Breast epithelium (tissue), 4 donors: ENCODE measurements at regions of chr16 and their contacts with region 1.

Region 1: GRCh38 chr16:88917146-88917914 is 50.9 kb upstream of the PABPN1L start:
- DNase-seq: no peak
- H3K4me3 ChIP-seq: no peak overlapping the region
- H3K27ac ChIP-seq: no peak overlapping the region
- H3K4me1 ChIP-seq: peaks cover 8 to 10% of the 10 kb centered on the region in 2 donors
- H3K27me3 ChIP-seq: no peaks in the 10 kb centered on the region
- CTCF ChIP-seq: no peak
- POLR2A ChIP-seq: no peak

Region 2: GRCh38 chr16:88957887-88958577 is 40.7 kb after region 1 on chr16:
- intact Hi-C with region 1: loop called (anchors 2 kb)
- DNase-seq: no peak
- H3K4me3 ChIP-seq: no peak overlapping the region
- H3K27ac ChIP-seq: no peak overlapping the region
- H3K4me1 ChIP-seq: no peaks in the 10 kb centered on the region
- H3K27me3 ChIP-seq: peaks cover 0 to 48% of the 10 kb centered on the region in 2 donors
- CTCF ChIP-seq: no peak
- POLR2A ChIP-seq: no peak

Region 3: GRCh38 chr16:88977018-88977811 is 59.9 kb after region 1 on chr16 and contains the start of gene CBFA2T3:
- intact Hi-C with region 1: no loop called
- DNase-seq: peak; percentile 30 to 57
- H3K4me3 ChIP-seq: peak within 1 kb of the TSS; percentile 15 to 32 (median 23)
- H3K27ac ChIP-seq: no peak within 1 kb of the TSS
- H3K4me1 ChIP-seq: no peaks in the 10 kb centered on the region
- H3K27me3 ChIP-seq: peaks cover 3 to 76% of the 10 kb centered on the region in 2 donors
- CTCF ChIP-seq: no peak
- POLR2A ChIP-seq: no peak
- total RNA-seq, gene CBFA2T3: 0.64 to 2.3 (median 0.88) TPM